ENCODE measurements at regions of chr14 and their contacts with region 1.

Region 1: GRCh38 chr14:92225731-92226130 is 97.2 kb upstream of the SLC24A4 start:
- DNase-seq: no peak

Region 2: DNA sequence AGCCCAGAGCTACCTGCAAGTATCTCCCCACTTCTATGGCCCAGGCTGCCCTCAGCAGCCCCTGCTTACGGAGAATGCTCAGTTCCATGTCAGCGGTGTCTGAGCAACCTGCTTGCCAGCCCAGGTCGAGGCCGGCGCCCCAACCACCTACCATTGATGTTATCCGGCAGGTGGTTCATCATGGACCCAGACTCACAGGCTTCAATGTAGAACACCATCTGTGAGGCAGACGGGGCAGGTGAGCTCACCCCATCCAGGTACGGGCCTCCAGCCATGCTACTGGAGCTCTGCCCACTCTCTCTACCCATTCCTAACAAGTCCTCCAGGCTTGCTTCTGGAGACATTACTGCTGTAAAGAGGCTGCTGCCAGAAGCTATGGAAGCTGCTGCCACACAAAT is 486.9 kb after region 1 on chr14:
- intact Hi-C with region 1: loop called in 1 of 2 experiments (anchors 5 kb)
- DNase-seq: no peak